KBM-7 (cell line): ENCODE measurements at regions of chr3 and their contacts with region 1.

Region 1: GRCh38 chr3:39189959-39190269 is 2.5 kb downstream of the XIRP1 start:
- DNase-seq: peak; percentile 82

Region 2: GRCh38 chr3:38878646-38879045 is 311.3 kb before region 1 on chr3:
- in situ Hi-C with region 1: no loop called
- DNase-seq: no peak

Region 3: DNA sequence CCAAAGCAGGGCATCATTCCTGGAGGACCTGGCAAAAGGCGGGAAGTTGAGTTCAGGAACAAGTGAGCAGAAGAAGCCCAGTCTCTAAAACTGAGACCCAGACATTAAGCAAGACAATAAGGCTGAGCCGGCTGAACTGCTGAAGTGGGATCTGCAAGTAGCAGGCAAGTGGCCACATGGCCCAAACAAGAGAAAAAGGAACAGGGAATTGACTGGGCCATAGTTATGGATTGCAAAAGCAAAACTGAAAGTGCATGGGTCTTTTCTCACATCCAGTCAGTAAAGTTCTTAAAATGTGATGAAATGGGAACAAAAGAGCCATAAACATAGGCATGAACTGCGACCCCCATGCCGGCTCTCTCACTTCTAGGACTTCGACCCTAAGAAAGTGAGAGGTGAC is 239.3 kb before region 1 on chr3:
- in situ Hi-C with region 1: no loop called
- DNase-seq: no peak

Region 4: GRCh38 chr3:39086144-39086543 is 103.8 kb before region 1 on chr3:
- in situ Hi-C with region 1: no loop called
- DNase-seq: no peak

Region 5: DNA sequence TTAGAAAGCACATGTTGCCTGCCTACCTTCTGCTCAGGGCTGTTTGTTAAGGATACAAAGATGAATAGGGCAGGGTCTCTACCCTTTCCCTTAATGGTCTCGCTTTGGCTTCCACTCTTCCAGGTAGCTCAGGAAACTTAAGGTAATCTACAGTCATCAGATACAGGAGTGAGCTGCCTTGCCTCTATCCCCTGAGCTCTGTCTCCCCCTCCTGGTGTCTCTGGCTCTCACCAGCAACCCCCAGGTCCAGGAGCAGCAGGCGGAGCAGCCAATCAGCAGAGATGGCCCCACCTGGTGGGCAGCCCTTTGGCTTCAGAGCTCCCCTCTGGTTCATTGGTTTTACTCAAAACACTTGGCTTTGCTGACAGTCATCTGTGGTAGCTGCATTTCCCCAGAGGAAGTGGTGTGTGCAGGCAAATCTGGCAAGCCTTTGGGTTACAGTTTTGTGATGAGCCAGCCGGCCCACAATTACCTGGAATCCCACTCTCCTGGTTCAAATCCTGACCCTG is 98.4 kb after region 1 on chr3:
- in situ Hi-C with region 1: loop called (anchors 10 kb)
- DNase-seq: peak; percentile 92

Region 6: DNA sequence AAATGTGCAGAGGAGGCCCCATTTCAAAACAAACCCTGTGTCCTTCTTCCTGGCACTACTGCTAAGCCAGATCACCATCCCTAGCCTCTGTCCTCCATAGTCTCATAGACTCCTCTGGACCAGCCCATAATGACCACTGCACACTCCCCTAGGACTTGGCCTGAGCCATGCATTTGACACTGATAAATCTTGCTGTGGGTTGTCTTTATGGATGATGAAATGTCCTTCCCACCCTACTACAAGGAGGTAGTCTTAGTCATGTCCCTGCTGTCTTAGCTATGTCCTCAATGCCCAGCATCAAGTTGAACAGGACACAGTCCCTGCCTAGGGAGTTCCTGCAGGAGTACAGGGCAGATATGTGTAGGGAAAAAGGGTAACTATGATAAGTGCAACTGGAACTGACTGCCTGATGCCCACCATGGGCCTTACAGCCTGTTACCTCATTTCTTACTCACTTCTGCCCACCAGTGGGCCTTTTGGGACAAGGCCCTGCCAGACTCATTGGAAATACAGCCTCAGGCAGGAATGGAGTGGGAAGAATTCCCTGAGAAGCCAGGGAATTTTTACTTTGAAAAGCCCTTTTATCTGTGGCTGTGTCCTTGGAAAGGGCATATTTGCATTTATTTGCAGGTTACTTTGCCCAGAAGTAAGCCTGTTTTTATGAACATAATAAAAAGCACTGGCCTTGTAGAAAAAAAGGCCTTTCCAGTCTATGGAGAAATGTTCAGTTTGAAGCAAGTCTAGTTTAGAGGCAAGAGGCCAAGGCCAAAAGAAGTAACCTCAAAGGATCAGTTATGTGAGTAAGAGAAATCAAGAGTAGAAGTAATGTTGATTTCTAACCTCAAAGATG is 920.0 kb after region 1 on chr3:
- in situ Hi-C with region 1: no loop called
- DNase-seq: no peak